Endothelial cell of umbilical vein (primary cell): ENCODE measurements at regions of chr5 and their contacts with region 1.

Region 1: DNA sequence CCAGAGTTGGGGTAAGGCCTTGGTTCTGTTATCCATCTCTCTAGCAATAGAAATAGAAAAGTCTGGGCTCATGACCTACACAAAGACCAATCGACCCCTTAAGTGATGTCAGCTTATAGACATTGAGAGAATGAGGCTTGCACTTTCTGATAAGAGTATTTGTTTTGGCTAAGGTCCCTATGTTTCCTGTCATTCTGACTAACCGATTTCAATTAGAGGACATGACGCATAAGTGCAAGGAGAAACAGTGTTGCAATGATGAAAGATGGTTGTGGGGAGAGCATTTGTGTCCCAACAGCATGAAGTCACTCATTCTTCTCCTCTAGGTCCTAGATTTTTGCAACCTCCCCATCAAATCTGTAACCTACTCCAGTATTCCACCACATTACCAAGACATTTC is 255.1 kb downstream of the MAT2B start:
- DNase-seq: peak; percentile 99
- H3K4me3 ChIP-seq: peak overlapping the region in 1 of 3 experiments; percentile 2
- H3K27ac ChIP-seq: peak overlapping the region; percentile 95
- H3K4me1 ChIP-seq: peaks cover 47% of the 10 kb centered on the region
- H3K27me3 ChIP-seq: no peaks in the 10 kb centered on the region
- CTCF ChIP-seq: no peak
- POLR2A ChIP-seq: peak; percentile 74

Region 2: DNA sequence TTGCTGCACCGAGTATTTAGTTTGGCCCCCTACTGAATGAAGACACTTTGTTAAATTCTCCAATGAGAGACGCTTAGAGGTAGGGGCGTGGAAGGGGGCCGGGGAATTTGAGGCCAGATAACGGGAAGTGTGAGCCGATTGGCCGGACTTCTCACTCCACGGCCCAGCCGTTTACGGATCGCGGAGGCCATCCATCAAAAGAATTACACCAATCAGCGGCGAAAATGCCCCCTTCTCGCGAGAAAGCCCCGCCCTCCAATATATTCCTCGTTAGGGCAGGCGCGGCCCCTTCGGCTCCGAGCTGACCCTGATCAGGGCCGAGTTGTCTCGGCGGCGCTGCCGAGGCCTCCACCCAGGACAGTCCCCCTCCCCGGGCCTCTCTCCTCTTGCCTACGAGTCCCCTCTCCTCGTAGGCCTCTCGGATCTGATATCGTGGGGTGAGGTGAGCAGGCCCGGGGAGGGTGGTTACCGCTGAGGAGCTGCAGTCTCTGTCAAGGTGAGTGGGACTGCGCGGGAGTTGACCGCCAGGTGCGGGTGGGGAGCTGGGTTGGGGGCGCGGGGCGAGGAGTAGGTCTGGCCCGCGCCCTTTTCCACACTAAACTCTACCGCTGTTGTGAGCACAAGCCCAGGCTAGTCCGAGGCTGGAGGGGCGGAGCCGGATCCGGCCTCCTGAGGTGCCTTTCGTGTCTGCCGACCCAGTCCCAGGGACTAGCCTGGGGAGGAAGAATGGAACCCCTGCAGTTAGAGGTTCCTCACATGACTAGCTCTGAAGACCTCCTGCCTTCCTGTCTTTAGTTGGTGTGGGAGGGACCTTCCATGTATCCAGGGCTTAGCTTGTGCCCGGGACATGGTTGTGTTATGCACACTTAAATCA is 323.0 kb before region 1 on chr5 and contains the start of gene CCNG1:
- CTCF ChIA-PET with region 1: no interaction called
- POLR2A ChIA-PET with region 1: no interaction called
- dilution Hi-C with region 1: no loop called
- intact Hi-C with region 1: no loop called
- DNase-seq: peak; percentile 97
- H3K4me3 ChIP-seq: peak within 1 kb of the TSS; percentile 90 to 99 (median 92)
- H3K27ac ChIP-seq: peak within 1 kb of the TSS; percentile 77
- H3K4me1 ChIP-seq: peaks cover 19% of the 10 kb centered on the region
- H3K27me3 ChIP-seq: peaks cover 0 to 4% of the 10 kb centered on the region in 2 experiments
- CTCF ChIP-seq: no peak
- POLR2A ChIP-seq: peak; percentile 96
- total RNA-seq, gene CCNG1: 164 and 186 TPM in 2 replicates

Region 3: DNA sequence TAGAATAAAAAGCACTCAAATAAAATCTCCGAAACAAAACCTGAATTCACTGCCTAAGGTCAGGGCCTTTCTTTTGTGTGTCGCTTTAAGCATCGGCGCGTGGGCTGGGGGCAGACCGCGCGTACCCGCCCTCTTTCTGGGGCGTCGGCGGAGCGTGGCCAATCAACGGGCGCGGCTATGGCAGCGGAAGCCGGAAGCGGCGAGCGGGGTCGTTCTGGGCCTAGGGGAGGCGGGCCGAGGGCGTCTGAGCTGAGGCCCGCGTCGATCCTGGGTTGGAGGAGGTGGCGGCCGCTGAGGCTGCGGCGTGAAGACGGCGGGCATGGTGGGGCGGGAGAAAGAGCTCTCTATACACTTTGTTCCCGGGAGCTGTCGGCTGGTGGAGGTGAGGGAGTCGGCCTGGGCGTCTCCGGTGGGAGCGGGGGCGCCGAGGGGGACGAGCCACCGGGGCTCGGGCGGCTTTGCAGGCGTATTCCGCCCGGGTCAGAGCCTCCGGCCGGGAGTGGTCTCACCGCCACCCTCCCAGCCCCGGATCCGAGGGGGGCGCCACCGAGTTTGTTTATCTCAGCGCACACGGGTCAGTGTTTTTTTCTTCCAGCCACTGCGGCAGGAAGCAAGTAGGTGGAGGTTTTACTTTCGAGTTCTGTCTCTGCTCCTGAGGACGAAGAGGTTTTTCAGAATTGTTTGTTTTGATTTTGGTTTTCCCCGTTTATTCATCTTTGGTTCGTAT is 255.0 kb before region 1 on chr5 and contains the start of gene MAT2B:
- CTCF ChIA-PET with region 1: no interaction called
- POLR2A ChIA-PET with region 1: no interaction called
- dilution Hi-C with region 1: no loop called
- intact Hi-C with region 1: loop called (anchors 1 kb)
- DNase-seq: peak; percentile 97
- H3K4me3 ChIP-seq: peak within 1 kb of the TSS; percentile 59 to 98 (median 72)
- H3K27ac ChIP-seq: peak within 1 kb of the TSS; percentile 70
- H3K4me1 ChIP-seq: peaks cover 37% of the 10 kb centered on the region
- H3K27me3 ChIP-seq: no peaks in the 10 kb centered on the region
- CTCF ChIP-seq: peak; percentile 52 to 68
- POLR2A ChIP-seq: peak; percentile 93
- total RNA-seq, gene MAT2B: 93.1 and 101 TPM in 2 replicates

Region 4: GRCh38 chr5:163770625-163771024 is 10.1 kb after region 1 on chr5:
- CTCF ChIA-PET with region 1: interaction called, 7 read pairs
- POLR2A ChIA-PET with region 1: no interaction called
- dilution Hi-C with region 1: no loop called
- intact Hi-C with region 1: loop called (anchors 1 kb)
- DNase-seq: peak; percentile 35
- H3K4me3 ChIP-seq: no peak overlapping the region
- H3K27ac ChIP-seq: no peak overlapping the region
- H3K4me1 ChIP-seq: peaks cover 23% of the 10 kb centered on the region
- H3K27me3 ChIP-seq: no peaks in the 10 kb centered on the region
- CTCF ChIP-seq: no peak
- POLR2A ChIP-seq: no peak

Region 5: DNA sequence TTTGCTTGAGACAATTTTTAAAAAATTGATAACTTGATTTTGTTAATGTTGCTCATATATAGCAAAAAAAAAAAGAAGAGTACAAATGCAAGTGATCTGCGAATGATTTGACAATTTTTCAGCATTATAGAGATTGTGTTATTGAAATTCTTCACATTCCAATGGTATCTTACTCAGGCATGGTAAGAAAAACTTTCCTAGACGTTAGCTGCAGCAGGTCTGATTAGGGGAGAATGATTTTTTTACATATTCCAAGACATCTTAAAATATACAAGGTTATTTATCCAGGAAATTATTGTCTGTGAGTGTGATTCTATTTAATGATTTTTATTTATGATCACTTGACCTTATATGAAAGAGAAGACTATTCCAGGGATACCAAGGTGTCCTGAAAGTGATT is 106.8 kb after region 1 on chr5:
- CTCF ChIA-PET with region 1: interaction called, 3 read pairs
- POLR2A ChIA-PET with region 1: interaction called, 3 read pairs
- dilution Hi-C with region 1: loop called (anchors 25 kb)
- intact Hi-C with region 1: loop called (anchors 1 kb)
- DNase-seq: peak; percentile 76
- H3K4me3 ChIP-seq: no peak overlapping the region
- H3K27ac ChIP-seq: peak overlapping the region; percentile 99
- H3K4me1 ChIP-seq: peaks cover 55% of the 10 kb centered on the region
- H3K27me3 ChIP-seq: no peaks in the 10 kb centered on the region
- CTCF ChIP-seq: no peak
- POLR2A ChIP-seq: peak; percentile 26

Region 6: DNA sequence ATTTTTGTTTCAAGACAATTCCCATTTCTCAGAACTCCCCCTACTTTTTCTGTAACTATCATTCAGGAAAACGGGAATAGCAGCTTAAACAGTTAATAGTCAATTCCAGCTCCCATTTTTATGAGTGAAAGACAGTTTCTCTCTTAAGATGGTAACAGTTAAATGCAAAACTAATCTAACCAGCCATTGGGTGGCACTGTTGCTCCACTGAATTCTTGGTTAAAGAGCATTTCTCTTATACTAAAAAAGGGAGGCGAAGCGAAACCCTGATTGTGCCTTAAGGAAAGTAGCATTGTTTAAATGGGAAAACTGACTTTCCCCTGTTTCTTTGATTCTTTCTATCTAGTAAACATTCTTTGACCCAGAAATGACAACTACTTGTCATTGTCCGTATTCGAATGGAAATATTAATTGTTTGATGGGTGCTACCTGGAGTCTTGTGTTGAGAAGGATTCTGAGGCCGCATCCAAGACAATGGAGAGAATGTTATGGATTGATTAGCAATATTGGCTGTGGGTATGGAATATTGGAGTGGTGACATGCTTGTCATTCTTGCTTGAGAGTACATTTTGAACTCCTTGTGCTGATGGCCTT is 252.7 kb after region 1 on chr5:
- CTCF ChIA-PET with region 1: interaction called, 9 read pairs
- POLR2A ChIA-PET with region 1: no interaction called
- dilution Hi-C with region 1: no loop called
- intact Hi-C with region 1: loop called (anchors 1 kb)
- DNase-seq: peak; percentile 88
- H3K4me3 ChIP-seq: no peak overlapping the region
- H3K27ac ChIP-seq: peak overlapping the region; percentile 47
- H3K4me1 ChIP-seq: peaks cover 11% of the 10 kb centered on the region
- H3K27me3 ChIP-seq: no peaks in the 10 kb centered on the region
- CTCF ChIP-seq: peak; percentile 45 to 59
- POLR2A ChIP-seq: no peak

Region 7: DNA sequence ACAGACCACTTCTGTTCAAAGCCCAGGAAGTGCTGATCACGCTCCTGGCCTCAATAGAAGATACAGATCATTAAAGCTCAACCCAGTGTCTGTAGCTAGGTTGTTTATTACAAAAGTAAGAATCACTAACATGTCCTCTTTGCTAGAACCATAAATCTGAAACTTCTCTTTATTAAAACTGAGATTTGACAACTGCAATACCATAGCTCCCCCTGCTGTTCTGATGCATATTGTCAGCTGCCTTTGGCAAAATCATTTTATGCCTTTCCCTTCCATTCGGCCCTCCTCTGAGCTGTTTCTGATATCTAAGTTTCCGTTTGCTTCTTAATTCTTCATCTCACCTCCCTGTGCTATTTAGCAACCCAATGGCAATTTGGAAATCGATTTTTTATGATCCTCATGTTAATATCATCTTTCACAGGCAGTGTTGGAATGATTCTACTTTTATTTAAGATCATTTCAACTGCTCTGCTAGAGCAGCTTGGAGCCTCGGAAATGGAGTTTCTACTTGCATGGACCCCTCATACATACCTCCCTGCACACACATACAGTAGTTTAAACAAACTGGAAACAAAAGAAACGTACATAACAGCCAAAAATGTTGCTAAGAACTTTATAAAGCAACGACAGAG is 743.8 kb after region 1 on chr5:
- CTCF ChIA-PET with region 1: interaction called, 4 read pairs
- POLR2A ChIA-PET with region 1: no interaction called
- dilution Hi-C with region 1: no loop called
- intact Hi-C with region 1: loop called (anchors 1 kb)
- DNase-seq: peak; percentile 71
- H3K4me3 ChIP-seq: no peak overlapping the region
- H3K27ac ChIP-seq: no peak overlapping the region
- H3K4me1 ChIP-seq: peaks cover 2% of the 10 kb centered on the region
- H3K27me3 ChIP-seq: no peaks in the 10 kb centered on the region
- CTCF ChIP-seq: peak; percentile 65 to 68
- POLR2A ChIP-seq: no peak